OCI-LY7 (cell line): ENCODE measurements at regions of chr12 and their contacts with region 1.

Region 1: GRCh38 chr12:89709157-89709994 is 738 bp upstream of the ATP2B1 start:
- DNase-seq: peak; percentile 98
- H3K4me3 ChIP-seq: peak overlapping the region; percentile 94
- H3K27ac ChIP-seq: peak overlapping the region; percentile 87
- H3K4me1 ChIP-seq: peaks cover 33% of the 10 kb centered on the region
- CTCF ChIP-seq: no peak

Region 2: DNA sequence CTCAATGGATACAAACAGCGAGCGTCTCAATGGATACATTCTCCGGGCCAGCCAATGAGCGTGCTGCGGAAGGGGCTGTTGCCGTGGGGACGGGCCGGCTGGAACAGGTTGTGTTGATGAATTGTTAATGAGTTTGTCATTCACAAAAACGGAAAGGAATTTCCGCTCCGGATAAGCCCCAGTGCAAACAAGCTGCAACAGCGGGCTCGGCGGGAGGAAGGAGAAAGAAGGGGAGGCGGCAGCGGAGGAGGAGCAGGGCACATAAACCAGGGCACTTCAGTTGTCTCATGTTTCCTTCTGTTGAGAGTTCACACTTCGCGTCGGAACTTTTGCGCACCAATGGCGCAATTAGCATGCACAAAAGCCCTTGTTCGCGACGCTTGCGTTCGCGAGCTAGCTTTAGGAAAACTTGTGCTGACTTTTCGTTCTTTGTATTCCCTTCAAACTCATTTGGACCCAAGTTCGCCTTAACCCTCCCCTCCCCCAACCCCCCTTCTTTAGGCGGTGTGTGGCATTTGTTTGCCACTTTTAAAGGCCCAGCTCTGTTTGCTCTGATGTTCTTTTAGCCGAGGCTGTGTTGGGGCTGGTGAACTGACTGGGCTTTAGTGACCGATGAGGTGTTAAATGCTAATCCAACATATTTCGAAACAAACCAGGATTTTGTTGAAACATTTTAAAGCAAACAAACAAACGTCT is 356.7 kb before region 1 on chr12 and contains the start of gene DUSP6:
- CTCF ChIA-PET with region 1: no interaction called
- POLR2A ChIA-PET with region 1: no interaction called
- intact Hi-C with region 1: loop called (anchors 2 kb)
- DNase-seq: peak; percentile 63
- H3K4me3 ChIP-seq: peak within 1 kb of the TSS; percentile 64
- H3K27ac ChIP-seq: no peak within 1 kb of the TSS
- H3K4me1 ChIP-seq: peaks cover 68% of the 10 kb centered on the region
- CTCF ChIP-seq: no peak
- total RNA-seq, gene DUSP6: 0.47 and 1.9 TPM in 2 replicates

Region 3: GRCh38 chr12:89542912-89543592 is 166.3 kb before region 1 on chr12:
- CTCF ChIA-PET with region 1: no interaction called
- POLR2A ChIA-PET with region 1: no interaction called
- intact Hi-C with region 1: loop called (anchors 5 kb)
- DNase-seq: peak; percentile 79
- H3K4me3 ChIP-seq: no peak overlapping the region
- H3K27ac ChIP-seq: no peak overlapping the region
- H3K4me1 ChIP-seq: peaks cover 5% of the 10 kb centered on the region
- CTCF ChIP-seq: peak; percentile 98

Region 4: DNA sequence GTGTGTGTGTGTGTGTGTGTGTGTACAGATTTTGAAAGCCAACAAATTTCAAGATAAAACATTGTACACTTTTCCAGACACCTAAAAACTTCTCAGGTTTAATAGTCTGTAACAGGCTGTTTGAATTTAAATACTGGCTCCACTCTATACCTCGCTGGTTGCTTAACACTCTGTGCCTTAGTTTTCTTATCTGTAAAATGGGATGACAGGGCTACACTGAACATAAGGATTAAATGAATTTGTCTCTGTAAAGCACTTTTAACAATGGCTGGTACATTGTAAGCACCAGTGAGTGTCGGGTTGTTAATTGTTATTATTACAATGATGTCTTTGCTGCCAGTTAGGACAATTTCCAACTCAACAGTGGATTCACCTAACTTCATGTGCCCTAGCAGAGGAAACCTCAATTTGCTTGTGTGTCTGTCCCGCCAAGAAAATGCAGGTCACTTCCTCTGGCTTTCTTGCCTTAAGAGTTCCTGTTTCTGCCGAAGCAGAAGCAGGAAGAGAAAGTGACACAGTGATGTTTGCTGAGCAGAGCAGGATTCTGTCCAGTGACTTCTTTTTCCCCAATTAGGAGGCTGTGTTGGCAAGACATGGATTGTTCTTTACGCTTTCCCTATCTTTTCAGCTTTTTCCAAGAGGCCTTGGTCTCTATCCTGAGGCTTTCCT is 153.3 kb after region 1 on chr12:
- CTCF ChIA-PET with region 1: no interaction called
- POLR2A ChIA-PET with region 1: interaction called, 5 read pairs
- intact Hi-C with region 1: loop called (anchors 1 kb)
- DNase-seq: peak; percentile 91
- H3K4me3 ChIP-seq: peak overlapping the region; percentile 49
- H3K27ac ChIP-seq: peak overlapping the region; percentile 78
- H3K4me1 ChIP-seq: peaks cover 63% of the 10 kb centered on the region
- CTCF ChIP-seq: no peak

Region 5: DNA sequence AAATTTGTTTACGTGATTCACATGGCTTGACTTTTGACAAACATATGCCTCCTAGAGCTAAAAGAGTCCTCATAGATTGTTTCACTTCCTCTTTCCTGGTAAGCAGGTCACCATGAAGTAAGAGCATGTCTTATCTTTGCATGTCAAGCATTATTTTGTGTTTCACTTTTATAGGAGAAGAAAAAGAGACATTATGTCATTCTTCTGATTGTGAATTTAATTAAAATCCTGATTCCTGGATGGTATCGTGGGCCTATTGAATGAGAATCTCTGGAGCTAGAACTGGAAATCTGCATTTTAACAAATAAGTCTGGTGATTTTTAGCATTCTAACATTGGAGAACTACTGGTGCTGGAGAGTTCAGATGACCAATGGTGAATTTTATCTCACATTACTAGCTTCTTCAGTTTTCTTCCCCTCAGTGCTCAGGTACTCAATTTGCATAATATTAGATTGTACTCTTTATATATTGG is 217.9 kb after region 1 on chr12:
- CTCF ChIA-PET with region 1: no interaction called
- POLR2A ChIA-PET with region 1: interaction called, 22 read pairs
- intact Hi-C with region 1: loop called (anchors 2 kb)
- DNase-seq: peak; percentile 92
- H3K4me3 ChIP-seq: peak overlapping the region; percentile 69
- H3K27ac ChIP-seq: peak overlapping the region; percentile 97
- H3K4me1 ChIP-seq: peaks cover 49% of the 10 kb centered on the region
- CTCF ChIP-seq: no peak

Region 6: GRCh38 chr12:90102957-90103652 is 393.7 kb after region 1 on chr12:
- CTCF ChIA-PET with region 1: no interaction called
- POLR2A ChIA-PET with region 1: no interaction called
- intact Hi-C with region 1: loop called (anchors 2 kb)
- DNase-seq: peak; percentile 69
- H3K4me3 ChIP-seq: no peak overlapping the region
- H3K27ac ChIP-seq: no peak overlapping the region
- H3K4me1 ChIP-seq: peaks cover 11% of the 10 kb centered on the region
- CTCF ChIP-seq: peak; percentile 91